ENCODE measurements at regions of chr6 and their contacts with region 1.

Region 1: GRCh38 chr6:13668291-13668928 is 43.2 kb downstream of the RANBP9 start:
- DNase-seq: no peak
- ATAC-seq: no peak
- H3K4me3 ChIP-seq: no peak overlapping the region
- H3K27ac ChIP-seq: no peak overlapping the region
- H3K4me1 ChIP-seq: peaks cover 3% of the 10 kb centered on the region; the same call in 1 of the 2 replicates
- H3K27me3 ChIP-seq: no peaks in the 10 kb centered on the region
- CTCF ChIP-seq: no peak
- POLR2A ChIP-seq: no peak
- RAD21 ChIP-seq: no peak

Region 2: DNA sequence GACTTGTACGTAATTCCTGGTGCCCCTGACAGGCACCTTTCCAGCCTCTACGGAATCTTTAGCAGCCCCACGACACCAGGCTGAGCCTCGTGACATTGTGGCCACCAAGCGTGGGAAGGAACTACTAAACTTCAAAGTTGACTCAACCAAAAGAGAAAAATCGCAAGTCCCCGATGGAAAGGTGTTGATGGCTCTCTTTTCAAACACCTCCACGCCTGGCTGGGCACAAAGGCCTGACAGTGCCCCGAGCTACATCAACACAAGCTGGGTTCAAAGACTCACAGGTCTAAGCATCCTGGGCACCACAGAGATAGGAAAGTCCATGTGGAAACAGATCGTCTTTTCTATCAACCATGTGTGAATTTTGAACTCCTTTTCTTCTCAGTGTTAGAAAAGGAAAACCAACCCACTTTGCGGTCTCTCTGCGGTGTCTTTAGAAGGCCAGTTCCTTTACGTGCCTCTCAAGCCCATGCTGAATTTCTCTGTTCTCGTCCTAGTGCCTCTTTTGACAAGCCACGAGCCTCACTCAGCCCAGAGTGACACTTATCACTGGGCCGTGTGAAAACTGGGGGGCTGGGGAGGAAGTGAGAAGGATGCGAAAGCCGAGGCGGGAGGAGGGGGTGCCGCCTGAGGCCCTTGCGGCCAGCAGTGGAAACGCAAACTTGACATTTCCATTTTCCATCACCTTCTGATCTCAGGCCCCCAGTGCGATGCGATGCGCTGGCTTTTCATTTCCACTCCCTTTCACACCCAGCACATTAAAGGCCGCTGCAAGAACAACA is 240.4 kb before region 1 on chr6:
- CTCF ChIA-PET with region 1: no interaction called
- POLR2A ChIA-PET with region 1: no interaction called
- dilution Hi-C with region 1: no loop called
- in situ Hi-C with region 1: no loop called
- intact Hi-C with region 1: no loop called
- DNase-seq: no peak
- ATAC-seq: no peak
- H3K4me3 ChIP-seq: no peak overlapping the region
- H3K27ac ChIP-seq: no peak overlapping the region
- H3K4me1 ChIP-seq: peaks cover 7% of the 10 kb centered on the region
- H3K27me3 ChIP-seq: no peaks in the 10 kb centered on the region
- CTCF ChIP-seq: no peak
- POLR2A ChIP-seq: no peak
- RAD21 ChIP-seq: no peak

Region 3: DNA sequence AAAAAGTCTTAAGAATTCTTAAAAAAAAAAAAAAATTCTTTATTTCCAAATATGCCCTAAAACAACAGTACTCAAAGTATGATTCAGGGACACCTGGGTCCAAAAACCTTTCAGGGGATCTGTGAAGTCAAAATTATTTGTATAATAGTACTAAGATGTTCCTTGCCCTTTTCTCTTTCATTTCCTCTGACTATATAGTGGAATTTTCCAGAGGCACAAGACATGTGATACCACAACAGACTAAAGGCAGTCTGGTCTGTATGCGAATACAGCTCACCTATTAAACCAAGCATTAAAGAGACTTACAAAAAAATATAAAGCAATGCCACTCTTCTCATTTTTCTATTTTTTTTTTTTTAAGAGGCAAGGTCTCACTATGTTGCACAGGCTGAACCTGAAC is 37.9 kb before region 1 on chr6:
- CTCF ChIA-PET with region 1: no interaction called
- POLR2A ChIA-PET with region 1: no interaction called
- dilution Hi-C with region 1: no loop called
- in situ Hi-C with region 1: no loop called
- intact Hi-C with region 1: loop called (anchors 5 kb)
- DNase-seq: no peak
- ATAC-seq: no peak
- H3K4me3 ChIP-seq: no peak overlapping the region
- H3K27ac ChIP-seq: no peak overlapping the region
- H3K4me1 ChIP-seq: no peaks in the 10 kb centered on the region
- H3K27me3 ChIP-seq: no peaks in the 10 kb centered on the region
- CTCF ChIP-seq: no peak
- POLR2A ChIP-seq: no peak
- RAD21 ChIP-seq: no peak

Region 4: DNA sequence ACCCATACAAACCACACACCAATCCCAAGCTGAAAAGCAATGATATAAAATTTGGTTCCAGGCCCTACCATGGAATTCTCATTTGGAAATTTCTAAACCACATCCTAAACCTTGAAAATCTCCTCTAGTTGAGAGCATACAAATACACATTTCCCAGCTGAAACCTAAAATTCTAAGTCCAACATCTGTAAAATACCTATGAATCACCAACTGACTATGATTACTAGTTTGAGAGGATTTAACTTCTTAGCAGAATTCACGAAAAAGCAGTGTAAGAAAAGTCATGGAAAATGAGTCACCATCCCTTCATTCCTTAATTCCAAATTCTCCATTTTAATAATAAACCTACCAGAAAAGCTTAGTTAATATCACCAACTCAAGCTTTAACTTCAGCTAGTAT is 27.8 kb after region 1 on chr6:
- CTCF ChIA-PET with region 1: no interaction called
- POLR2A ChIA-PET with region 1: interaction called, 3 read pairs
- dilution Hi-C with region 1: no loop called
- in situ Hi-C with region 1: no loop called
- intact Hi-C with region 1: loop called (anchors 5 kb)
- DNase-seq: peak; percentile 90
- ATAC-seq: peak; percentile 78
- H3K4me3 ChIP-seq: no peak overlapping the region
- H3K27ac ChIP-seq: no peak overlapping the region
- H3K4me1 ChIP-seq: peaks cover 12% of the 10 kb centered on the region
- H3K27me3 ChIP-seq: no peaks in the 10 kb centered on the region
- CTCF ChIP-seq: no peak
- POLR2A ChIP-seq: no peak
- RAD21 ChIP-seq: no peak

Measured in IMR-90 (cell line).